Ascending aorta (tissue), 2 donors: ENCODE measurements at regions of chr5 and their contacts with region 1.

Region 1: DNA sequence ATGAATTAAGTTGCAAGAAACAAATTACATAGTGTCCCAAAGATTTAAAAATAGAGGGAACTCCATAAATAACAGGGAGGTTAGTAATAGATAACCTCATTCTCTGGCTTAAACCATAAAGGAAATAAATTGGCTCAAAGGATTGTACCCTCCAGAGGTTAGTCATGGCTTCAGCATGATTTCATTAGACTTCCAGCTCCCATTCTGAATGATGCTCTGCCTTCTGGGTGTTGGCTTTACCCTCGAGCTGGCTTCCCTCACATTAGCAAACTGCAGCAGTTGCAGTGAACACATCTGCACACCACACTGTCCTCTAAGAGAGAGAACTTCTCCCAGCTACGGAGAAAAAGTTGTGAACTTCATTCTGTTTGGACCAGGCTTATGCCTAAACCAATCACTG is 70.4 kb downstream of the RGS7BP start:
- DNase-seq: peak in 1 of 2 donors; percentile 69
- H3K4me3 ChIP-seq: peak overlapping the region in 1 of 2 donors; percentile 21
- H3K27ac ChIP-seq: peak overlapping the region; percentile 30 to 60
- H3K4me1 ChIP-seq: peaks cover 6 to 14% of the 10 kb centered on the region in 2 donors
- H3K27me3 ChIP-seq: no peaks in the 10 kb centered on the region
- CTCF ChIP-seq: no peak

Region 2: DNA sequence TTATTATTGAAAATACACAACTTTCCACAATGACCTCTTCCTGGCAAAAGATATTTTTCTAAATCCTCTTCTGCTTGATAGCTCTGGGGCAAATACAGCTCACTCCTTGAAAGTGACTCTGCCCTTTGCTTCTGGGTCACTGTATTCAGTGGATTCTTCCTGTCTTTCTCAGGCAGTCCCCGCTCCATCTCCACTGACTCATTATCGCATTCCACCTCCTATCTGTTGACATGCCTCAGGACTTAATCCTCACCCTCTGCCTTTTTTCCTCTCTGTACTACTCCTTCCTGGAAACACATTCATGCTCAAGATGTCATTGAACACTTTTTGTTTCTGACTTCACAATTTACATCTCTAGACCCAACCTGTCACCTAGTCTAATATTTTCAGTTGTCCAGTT is 78.9 kb before region 1 on chr5:
- intact Hi-C with region 1: no loop called
- DNase-seq: no peak
- H3K4me3 ChIP-seq: no peak overlapping the region
- H3K27ac ChIP-seq: no peak overlapping the region
- H3K4me1 ChIP-seq: no peaks in the 10 kb centered on the region
- H3K27me3 ChIP-seq: no peaks in the 10 kb centered on the region
- CTCF ChIP-seq: no peak

Region 3: GRCh38 chr5:64532212-64532611 is 44.0 kb before region 1 on chr5:
- intact Hi-C with region 1: loop called (anchors 5 kb)
- DNase-seq: no peak
- H3K4me3 ChIP-seq: peak overlapping the region in 1 of 2 donors; percentile 19
- H3K27ac ChIP-seq: peak overlapping the region; percentile 56
- H3K4me1 ChIP-seq: peaks cover 0 to 19% of the 10 kb centered on the region in 2 donors
- H3K27me3 ChIP-seq: no peaks in the 10 kb centered on the region
- CTCF ChIP-seq: no peak

Region 4: DNA sequence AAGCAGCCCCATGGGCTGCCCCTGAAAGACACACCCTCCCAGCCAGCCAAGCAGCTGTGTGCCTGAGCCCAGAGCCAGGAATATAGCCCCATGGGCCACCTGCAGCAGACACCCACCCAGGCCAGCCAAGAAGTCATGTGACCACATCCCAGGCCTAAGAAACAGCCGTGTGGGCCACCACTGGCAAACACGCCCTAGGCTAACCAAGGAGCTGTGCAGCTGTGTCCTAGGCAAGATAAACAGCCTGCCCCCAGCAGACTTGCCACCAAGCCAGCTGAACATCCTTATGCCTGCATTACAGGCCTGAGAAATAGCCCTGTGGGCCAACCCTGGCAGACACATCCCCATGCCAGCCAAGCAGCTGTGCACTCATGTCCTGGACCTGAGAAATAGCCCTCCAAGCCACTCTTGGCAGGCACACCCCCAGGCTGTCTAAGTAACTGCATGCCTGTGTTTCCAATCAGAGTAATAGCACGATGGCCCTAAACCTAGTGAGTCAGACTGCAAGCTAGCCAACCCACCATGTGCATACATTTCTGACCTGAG is 762.4 kb after region 1 on chr5:
- intact Hi-C with region 1: no loop called
- DNase-seq: no peak
- H3K4me3 ChIP-seq: no peak overlapping the region
- H3K27ac ChIP-seq: no peak overlapping the region
- H3K4me1 ChIP-seq: no peaks in the 10 kb centered on the region
- H3K27me3 ChIP-seq: no peaks in the 10 kb centered on the region
- CTCF ChIP-seq: no peak